Calu3 (cell line): ENCODE measurements at regions of chr16 and their contacts with region 1.

Region 1: GRCh38 chr16:60371591-60371990 is 1637.5 kb upstream of the GOT2 start:
- DNase-seq: no peak
- H3K4me3 Mint-ChIP-seq: no peak overlapping the region
- H3K27ac Mint-ChIP-seq: no peak overlapping the region
- H3K4me1 Mint-ChIP-seq: no peaks in the 10 kb centered on the region
- H3K27me3 Mint-ChIP-seq: no peaks in the 10 kb centered on the region
- CTCF ChIP-seq: no peak

Region 2: GRCh38 chr16:60310846-60311445 is 60.6 kb before region 1 on chr16:
- CTCF ChIA-PET with region 1: no interaction called
- intact Hi-C with region 1: loop called (anchors 10 kb)
- DNase-seq: no peak
- H3K4me3 Mint-ChIP-seq: no peak overlapping the region
- H3K27ac Mint-ChIP-seq: no peak overlapping the region
- H3K4me1 Mint-ChIP-seq: no peaks in the 10 kb centered on the region
- H3K27me3 Mint-ChIP-seq: no peaks in the 10 kb centered on the region
- CTCF ChIP-seq: no peak

Region 3: GRCh38 chr16:60337671-60338070 is 33.9 kb before region 1 on chr16:
- CTCF ChIA-PET with region 1: no interaction called
- intact Hi-C with region 1: no loop called
- DNase-seq: no peak
- H3K4me3 Mint-ChIP-seq: no peak overlapping the region
- H3K27ac Mint-ChIP-seq: no peak overlapping the region
- H3K4me1 Mint-ChIP-seq: no peaks in the 10 kb centered on the region
- H3K27me3 Mint-ChIP-seq: no peaks in the 10 kb centered on the region
- CTCF ChIP-seq: no peak

Region 4: DNA sequence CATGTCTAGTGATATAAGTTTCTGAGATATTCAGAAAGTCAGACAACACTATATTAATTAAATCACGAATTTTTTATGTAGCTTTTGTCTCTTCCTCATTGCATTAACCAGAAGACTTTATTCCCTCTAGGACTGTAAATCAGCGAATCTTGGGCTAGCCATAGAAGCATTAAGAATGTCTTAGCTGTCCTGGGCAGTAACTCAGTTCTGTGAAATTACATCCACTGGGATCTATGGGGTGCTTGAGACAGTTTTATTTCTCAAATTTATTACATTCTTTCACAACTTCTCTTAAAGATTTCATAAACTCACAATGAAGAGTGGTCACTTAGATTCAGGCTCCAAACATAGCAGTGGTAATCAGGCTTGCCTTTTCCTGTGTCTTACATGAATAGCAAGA is 511.2 kb after region 1 on chr16:
- CTCF ChIA-PET with region 1: no interaction called
- intact Hi-C with region 1: no loop called
- DNase-seq: no peak
- H3K4me3 Mint-ChIP-seq: no peak overlapping the region
- H3K27ac Mint-ChIP-seq: no peak overlapping the region
- H3K4me1 Mint-ChIP-seq: no peaks in the 10 kb centered on the region
- H3K27me3 Mint-ChIP-seq: no peaks in the 10 kb centered on the region
- CTCF ChIP-seq: no peak